Activated T-helper 2 cell treated with anti-CD3 and anti-CD28 coated beads, Interferon-gamma antibody, Interleukin-2, Interleukin-4, amounts not matched to agents 10 μg/mL and 5 μg/mL and 100 μg/mL, durations not matched to agents 14 hours and 24 hours and 36 hours (primary cell): ENCODE measurements at regions of chr11 and their contacts with region 1.

Region 1: DNA sequence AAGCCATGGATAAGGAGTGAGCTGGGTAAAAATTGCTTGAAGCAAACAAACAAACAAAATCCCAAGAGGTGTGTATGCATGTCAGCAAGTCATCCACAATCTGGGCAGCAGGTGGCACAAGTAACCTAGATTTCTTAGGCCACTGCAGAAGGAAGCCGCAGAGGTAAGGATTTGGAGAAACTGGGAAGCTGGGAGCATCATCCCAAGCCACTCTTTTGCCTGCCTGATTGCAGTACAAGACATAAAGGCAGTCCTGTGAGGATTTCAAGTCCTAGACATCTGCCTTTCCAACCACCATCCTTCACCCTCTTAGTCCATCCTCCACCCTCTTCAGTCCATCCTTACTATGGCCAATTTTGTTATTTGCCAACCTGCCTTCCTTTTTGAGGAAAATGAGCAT is 67.2 kb upstream of the BMAL1 start:
- DNase-seq: no peak
- H3K4me3 Mint-ChIP-seq: no peak overlapping the region
- H3K27ac Mint-ChIP-seq: no peak overlapping the region
- H3K4me1 Mint-ChIP-seq: peaks cover 28% of the 10 kb centered on the region
- H3K27me3 Mint-ChIP-seq: peaks cover 11% of the 10 kb centered on the region

Region 2: DNA sequence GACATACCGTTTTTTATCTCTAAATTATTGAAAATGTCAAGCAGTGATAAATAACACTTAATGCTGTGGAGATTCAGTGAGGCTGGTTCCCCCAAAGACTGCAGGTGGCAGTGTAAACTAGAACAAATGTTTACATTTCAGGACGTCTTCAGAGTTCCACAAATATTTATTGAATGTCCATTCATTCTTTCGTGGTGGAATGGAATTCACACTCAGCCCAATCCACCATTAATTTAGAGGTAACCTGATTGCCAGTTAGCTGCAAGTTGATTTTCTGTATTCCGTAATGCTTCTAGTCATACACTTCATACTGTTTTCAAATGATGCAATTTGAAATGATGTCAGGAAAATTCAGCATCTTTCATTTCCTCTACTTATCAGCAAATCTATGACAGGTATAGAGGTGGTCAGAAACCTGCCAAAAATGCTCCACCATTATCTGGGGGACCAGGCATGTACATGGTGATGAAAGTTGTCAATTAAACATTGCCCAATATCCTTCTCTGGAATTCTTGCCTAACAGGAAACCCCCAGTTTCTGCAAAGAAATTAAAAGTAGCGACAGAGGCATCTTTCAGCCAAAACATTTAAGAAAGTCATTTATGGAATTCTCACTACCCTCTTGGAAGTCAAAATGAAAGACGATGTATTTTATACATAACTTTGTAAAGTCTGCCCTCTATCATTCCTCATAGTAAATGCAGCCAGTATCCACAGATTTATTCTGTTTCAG is 27.2 kb before region 1 on chr11:
- intact Hi-C with region 1: loop called (anchors 2 kb)
- DNase-seq: no peak
- H3K4me3 Mint-ChIP-seq: no peak overlapping the region
- H3K27ac Mint-ChIP-seq: no peak overlapping the region
- H3K4me1 Mint-ChIP-seq: peaks cover 6% of the 10 kb centered on the region
- H3K27me3 Mint-ChIP-seq: peaks cover 9% of the 10 kb centered on the region

Region 3: GRCh38 chr11:13276832-13277767 is 66.7 kb after region 1 on chr11:
- intact Hi-C with region 1: loop called (anchors 2 kb)
- DNase-seq: peak; percentile 97
- H3K4me3 Mint-ChIP-seq: peak overlapping the region; percentile 98
- H3K27ac Mint-ChIP-seq: peak overlapping the region; percentile 79
- H3K4me1 Mint-ChIP-seq: peaks cover 45% of the 10 kb centered on the region
- H3K27me3 Mint-ChIP-seq: peaks cover 57% of the 10 kb centered on the region

Region 4: GRCh38 chr11:13335319-13335718 is 124.9 kb after region 1 on chr11:
- intact Hi-C with region 1: loop called (anchors 1 kb)
- DNase-seq: peak; percentile 51
- H3K4me3 Mint-ChIP-seq: no peak overlapping the region
- H3K27ac Mint-ChIP-seq: no peak overlapping the region
- H3K4me1 Mint-ChIP-seq: peaks cover 44% of the 10 kb centered on the region
- H3K27me3 Mint-ChIP-seq: no peaks in the 10 kb centered on the region

Region 5: DNA sequence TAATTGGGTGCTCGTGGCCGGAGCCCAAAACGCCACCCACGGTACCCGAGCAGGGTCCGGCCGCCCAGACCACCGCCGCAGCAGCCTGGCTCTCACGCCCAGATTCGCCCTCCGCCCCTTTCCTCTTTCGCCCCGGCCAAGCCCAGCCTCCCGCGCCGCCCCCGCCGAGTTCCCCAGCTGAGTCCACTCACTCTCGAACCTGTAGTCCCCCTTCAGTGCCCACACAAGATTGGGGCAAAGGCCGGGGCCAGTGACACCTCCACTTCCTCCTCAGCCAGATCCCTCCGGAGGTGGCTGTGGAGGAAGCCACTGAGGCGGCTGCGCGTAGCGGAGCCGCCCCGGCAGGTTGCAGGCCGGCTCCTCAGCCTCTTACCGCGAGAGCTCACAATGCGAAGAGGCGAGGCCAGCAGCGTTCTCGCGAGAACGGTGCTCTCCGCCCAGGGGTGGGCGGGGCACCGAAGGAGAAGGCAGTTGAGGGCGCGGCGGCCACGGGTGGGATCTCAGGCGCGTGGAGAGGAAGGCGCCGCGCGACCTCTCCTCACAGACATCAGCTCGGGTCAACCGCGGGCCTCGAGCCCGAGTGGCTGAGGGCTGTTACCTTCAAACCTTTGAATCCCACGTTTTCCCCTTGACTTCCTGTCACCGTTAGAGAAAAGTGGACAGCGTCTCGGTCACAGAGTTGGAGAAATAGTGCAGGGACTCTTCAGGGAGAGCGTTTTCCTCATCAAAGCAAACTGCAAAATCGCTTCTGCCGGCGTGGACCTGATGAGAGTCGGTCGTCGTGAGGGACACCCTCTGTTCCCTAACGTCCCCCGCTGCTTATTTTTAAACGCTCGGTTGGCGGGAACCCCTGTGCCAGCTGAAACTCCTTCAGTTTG is 252.7 kb after region 1 on chr11 and contains the start of gene BTBD10:
- intact Hi-C with region 1: loop called (anchors 10 kb)
- DNase-seq: peak; percentile 91
- H3K4me3 Mint-ChIP-seq: peak within 1 kb of the TSS; percentile 98
- H3K27ac Mint-ChIP-seq: peak within 1 kb of the TSS; percentile 93
- H3K4me1 Mint-ChIP-seq: peaks cover 30% of the 10 kb centered on the region
- H3K27me3 Mint-ChIP-seq: no peaks in the 10 kb centered on the region
- total RNA-seq, gene BTBD10: 22.6 and 24.9 TPM in 2 replicates

Region 6: DNA sequence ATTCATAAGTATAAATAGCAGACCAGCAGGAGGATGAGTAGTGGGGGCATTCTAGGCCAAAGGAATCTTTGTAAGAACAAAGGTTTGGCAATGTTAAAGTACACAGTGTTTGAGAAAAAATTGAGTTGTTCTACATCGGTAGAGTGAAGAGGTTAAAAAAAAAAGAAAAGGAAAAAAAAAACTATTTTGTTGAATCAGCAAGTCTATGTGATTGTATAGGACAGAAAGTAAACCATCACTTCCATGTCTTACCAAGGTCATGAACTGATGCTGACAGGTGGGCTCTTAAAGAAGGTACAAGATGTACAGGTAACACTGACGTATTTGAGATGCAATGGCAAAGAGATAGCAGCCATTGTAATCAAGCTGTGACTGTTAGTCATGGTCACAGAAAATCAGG is 314.8 kb after region 1 on chr11:
- intact Hi-C with region 1: no loop called
- DNase-seq: no peak
- H3K4me3 Mint-ChIP-seq: no peak overlapping the region
- H3K27ac Mint-ChIP-seq: no peak overlapping the region
- H3K4me1 Mint-ChIP-seq: no peaks in the 10 kb centered on the region
- H3K27me3 Mint-ChIP-seq: no peaks in the 10 kb centered on the region